ENCODE measurements at regions of chr1 and their contacts with region 1.

Region 1: DNA sequence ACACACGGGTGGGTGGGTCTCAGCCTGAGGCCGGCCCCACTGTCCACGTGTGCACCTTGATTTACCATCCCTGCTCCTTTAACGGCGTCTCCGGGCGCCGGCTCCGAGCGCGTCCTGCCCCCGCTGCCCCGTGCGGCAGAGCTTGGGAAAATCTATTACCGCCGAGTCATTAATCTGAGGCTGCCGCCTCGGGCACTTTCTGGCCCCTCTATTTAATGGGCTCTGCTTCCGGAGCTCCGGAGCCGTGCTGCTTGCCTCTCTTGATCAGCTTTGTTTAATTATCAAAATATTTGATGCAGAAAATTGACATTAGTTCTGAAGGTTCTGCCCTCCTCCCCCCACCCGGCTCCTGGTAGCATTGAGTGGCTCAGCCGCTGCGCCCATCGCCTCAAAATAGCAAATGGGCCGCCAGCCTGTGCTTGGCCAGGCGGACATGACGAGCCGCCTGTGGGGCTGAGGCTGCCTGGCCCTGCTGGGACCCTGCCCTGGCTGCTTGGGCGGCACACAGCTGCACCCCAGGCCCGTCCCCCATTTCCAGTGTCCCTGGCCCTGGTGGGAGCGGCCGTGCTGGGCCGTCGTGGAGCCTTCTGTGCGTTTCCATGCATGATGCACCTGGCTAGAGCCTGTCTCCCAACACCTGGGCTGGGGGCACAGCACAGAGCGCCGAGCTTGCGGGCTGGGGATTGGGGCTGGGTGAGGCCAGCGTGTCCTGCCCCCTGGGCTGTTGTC is 81.6 kb upstream of the TTC34 start:
- DNase-seq: no peak

Region 2: DNA sequence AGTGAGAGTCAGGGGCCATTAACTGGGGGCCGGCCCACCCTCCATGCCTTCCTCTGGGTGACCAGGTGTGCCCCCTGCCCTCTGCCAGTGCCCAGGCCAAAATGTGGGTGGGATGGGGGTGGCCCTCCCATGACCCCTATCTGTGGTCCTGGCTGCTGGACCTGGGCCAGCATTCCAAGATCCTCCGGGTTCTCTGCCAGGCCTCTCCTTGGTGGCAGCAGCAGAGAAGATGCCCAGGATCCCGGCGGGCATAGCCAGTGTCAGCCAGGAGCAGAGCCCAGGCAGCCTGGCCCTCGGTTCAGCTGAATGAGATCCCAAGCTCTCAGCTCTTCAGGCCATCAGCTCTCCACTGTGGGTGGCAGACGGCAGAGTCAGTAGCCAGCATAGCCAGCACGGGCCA is 106.8 kb after region 1 on chr1:
- intact Hi-C with region 1: loop called (anchors 10 kb)
- DNase-seq: peak in 3 of 10 donors; percentile 5 to 77 (median 67)

Measured in posterior cingulate gyrus (tissue), 11 donors.